ENCODE measurements at regions of chr2 and their contacts with region 1.

Region 1: DNA sequence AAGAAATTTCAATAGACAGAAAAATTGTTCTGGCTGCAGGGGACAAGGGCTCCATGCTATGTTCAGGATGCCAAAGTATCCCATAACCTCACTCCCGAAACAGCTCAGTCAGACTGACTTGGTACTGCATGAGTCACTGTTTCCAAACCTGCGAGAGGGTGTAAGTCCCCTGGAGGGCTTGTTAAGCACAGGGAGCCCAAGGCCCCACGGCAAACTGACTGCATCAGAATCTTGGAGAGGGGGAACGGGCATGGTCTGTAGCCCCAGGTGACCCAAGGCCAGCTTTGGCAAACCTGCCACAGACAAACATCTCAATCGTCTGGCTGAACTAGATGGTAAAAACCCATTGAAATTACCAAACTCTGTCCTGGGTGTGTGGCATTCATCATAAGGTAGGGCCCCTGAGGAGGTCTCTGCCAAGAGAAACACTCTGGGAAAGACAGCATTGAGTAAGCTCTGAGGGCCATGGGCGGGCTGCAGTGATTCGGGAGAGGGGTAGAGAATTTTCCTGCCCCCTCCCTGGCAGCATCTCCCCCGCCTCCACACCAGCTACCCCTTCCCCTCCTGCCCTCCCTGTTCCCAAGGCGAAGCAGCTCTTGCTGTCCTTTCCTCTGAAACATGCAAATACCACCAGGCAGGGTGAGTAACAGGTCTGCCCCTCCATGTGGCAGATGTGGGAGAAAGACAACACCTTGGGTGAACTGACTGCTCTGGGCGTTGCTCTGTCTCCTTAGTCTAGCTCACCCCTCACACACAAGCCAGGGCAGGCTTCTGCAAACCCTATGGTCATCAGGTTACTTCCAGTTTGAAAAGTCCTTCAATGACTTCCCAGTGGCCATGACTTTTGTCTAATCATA is 274.7 kb upstream of the SIX2 start:
- DNase-seq: peak; percentile 60 to 81
- ATAC-seq: peak; percentile 80
- H3K4me3 ChIP-seq: no peak overlapping the region
- H3K27ac ChIP-seq: peak overlapping the region; percentile 30 to 56
- H3K4me1 ChIP-seq: peaks cover 0 to 3% of the 10 kb centered on the region in 2 donors
- H3K27me3 ChIP-seq: no peaks in the 10 kb centered on the region

Region 2: GRCh38 chr2:45169339-45170190 is 114.4 kb before region 1 on chr2:
- intact Hi-C with region 1: loop called in 1 of 2 experiments (anchors 10 kb)
- DNase-seq: peak; percentile 58 to 79
- ATAC-seq: peak; percentile 73
- H3K4me3 ChIP-seq: peak overlapping the region; percentile 45 to 53
- H3K27ac ChIP-seq: peak overlapping the region in 1 of 2 donors; percentile 22
- H3K4me1 ChIP-seq: peaks cover 0 to 3% of the 10 kb centered on the region in 2 donors
- H3K27me3 ChIP-seq: no peaks in the 10 kb centered on the region

Region 3: DNA sequence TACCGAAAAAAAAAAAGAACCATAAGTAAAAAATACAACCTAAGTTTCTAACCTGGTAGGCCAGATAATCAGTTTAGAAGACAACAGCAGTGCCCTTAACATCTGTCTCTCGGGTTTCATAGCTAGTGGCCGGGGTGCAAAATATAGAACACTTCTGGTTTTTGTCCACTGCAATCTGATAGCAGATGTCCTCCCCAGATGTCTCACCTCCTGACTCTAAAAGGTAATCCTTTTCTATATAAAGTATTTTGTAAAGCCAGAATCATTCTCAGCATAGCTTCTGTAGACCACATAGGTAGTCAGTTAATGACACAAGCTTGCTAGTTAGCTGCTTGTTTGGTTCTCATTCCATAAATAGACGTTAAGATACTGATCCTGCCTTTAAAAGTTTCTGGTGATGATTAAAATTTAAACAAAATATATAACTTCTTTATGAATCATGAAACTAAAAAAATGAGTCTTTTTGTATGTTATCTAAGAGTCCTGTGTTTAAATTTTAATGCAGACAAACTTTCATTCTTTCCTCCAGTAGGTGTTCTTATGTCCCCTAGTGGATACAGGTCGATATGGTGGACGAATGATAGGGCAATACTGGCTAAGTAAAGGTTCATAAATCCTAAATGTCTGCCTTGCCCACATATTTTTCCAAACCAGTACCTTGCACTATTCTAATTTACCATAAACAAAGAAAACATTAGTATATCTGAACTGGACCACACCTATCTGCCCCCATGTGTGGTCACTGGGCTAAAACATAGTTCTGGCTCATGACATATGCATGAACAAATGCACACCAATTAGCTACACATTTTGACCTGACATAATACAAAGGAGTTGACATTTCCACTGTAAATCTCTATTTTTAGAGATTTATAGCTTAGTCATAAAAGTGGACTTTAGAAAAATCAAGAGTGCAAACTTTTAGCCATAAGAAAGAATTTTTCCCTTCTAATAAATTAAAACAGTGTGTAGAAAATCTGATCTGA is 156.1 kb after region 1 on chr2:
- intact Hi-C with region 1: loop called in 1 of 2 experiments (anchors 10 kb)
- DNase-seq: no peak
- ATAC-seq: no peak
- H3K4me3 ChIP-seq: no peak overlapping the region
- H3K27ac ChIP-seq: no peak overlapping the region
- H3K4me1 ChIP-seq: peaks cover 0 to 13% of the 10 kb centered on the region in 2 donors
- H3K27me3 ChIP-seq: no peaks in the 10 kb centered on the region